ENCODE measurements at regions of chr2 and their contacts with region 1.

Region 1: GRCh38 chr2:215841175-215841816 is 172.1 kb downstream of the MREG start:
- DNase-seq: peak; percentile 24
- H3K4me3 ChIP-seq: no peak overlapping the region
- H3K27ac ChIP-seq: peak overlapping the region; percentile 69
- H3K4me1 ChIP-seq: peaks cover 46% of the 10 kb centered on the region
- CTCF ChIP-seq: no peak

Region 2: DNA sequence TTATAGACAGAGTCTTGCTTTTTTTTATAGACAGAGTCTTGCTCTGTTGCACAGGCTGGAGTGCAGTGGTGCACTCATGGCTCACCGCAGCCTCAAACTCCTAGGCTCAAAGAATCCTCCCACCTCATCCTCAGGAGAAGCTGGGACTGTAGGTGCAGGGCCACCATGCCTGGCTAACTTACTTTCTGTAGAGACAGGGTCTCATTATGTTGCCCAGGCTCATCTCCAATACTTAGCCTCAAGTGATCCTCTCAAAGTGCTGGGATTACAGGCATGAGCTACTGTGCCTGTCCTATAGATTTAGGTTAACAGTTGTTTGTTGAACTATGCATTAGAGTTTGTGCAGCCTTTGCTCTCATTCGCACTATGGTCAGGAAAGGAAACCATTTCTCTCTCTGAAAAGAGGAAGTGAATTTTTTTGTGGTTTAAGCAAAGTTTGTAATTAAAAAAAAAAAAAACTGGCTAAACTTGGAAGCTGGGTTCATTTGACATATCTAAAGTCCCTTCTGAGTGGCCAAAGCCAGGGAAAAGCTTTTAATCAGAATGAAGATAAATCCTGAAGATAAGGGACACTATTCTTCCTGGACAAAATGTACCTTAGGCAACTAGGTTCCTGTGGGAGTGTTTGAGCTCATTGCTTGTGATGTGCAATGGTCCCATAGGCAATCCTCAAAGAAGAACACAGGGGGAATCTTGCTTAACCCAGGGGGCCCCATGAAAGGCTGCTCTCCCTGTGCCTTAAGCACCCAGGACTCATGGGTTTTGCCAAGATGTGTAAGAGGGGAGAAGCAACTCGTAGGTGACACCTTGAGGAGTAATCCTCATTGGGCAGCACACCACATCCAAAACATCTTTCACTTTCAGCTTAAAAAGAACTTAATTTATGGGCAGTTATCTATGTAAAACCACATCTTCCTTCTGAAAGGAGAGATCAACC is 29.6 kb before region 1 on chr2:
- CTCF ChIA-PET with region 1: no interaction called
- POLR2A ChIA-PET with region 1: interaction called, 11 read pairs
- intact Hi-C with region 1: no loop called
- DNase-seq: peak; percentile 86
- H3K4me3 ChIP-seq: peak overlapping the region; percentile 53
- H3K27ac ChIP-seq: peak overlapping the region; percentile 61
- H3K4me1 ChIP-seq: peaks cover 31% of the 10 kb centered on the region
- CTCF ChIP-seq: no peak

Region 3: DNA sequence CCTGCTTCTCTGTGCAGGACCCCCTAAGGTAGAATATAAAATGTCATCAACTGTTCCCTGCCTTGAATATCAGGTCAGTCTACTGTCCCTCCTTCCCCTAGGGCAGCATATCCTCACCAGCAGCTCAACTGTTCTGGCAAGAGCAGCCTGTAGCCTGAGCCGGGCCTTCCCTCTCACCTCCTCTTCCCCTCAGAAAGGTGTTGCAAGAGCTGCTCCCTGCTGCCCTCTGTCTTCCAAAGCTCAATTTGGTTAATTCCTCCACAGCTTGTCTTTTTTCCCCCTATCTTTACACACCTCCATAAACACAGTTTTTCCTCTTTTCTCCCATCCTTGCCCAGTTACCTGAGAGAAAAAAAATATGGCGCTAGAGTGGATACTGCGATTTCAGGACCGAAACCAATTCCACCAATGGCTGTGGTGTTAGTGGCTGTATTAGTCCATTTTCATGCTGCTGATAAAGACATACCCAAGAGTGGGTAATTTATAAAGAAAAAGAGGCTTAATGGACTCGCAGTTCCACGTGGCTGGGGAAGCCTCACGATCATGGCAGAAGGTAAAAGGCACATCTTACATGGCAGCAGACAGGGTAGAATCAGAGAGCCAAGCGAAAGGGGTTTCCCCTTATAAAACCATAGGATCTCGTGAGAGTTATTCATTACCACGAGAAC is 12.6 kb before region 1 on chr2:
- CTCF ChIA-PET with region 1: interaction called, 4 read pairs
- POLR2A ChIA-PET with region 1: interaction called, 12 read pairs
- intact Hi-C with region 1: no loop called
- DNase-seq: peak; percentile 64
- H3K4me3 ChIP-seq: no peak overlapping the region
- H3K27ac ChIP-seq: no peak overlapping the region
- H3K4me1 ChIP-seq: no peaks in the 10 kb centered on the region
- CTCF ChIP-seq: peak; percentile 84

Measured in OCI-LY7 (cell line).